T-cell (primary cell): ENCODE measurements at regions of chr5 and their contacts with region 1.

Region 1: DNA sequence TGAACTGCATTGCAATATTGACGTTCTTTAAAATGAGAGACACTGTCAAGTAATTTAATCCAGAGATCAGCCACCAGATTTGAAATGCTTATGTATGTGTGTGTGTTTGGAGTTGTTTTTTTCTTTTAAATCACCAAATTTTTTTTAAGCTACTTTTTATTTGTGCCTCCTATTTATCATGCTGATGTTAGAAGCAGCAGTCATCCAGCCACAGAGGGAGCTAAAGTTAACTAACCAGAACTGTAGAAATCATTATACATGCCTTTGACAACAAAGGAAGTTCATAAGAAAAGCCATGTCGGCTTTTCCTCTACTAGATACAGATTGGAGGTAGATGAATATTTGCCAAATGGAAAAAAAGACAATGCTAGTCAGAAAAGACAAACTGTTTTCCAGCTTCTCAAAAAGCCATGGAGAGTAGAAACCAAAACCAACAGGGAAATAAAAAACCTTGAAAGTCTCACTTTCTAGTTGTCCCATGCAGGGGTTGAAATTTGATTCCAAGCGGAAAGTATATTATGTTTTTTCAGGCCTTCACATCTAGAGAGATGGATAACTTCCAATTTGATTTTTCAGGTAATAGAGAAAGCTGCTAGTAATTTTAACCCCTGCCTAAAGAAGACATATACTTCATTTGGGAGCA is 4.5 kb downstream of the PURA start:
- DNase-seq: peak in 1 of 35 experiments; percentile 31
- ATAC-seq: no peak
- H3K4me3 ChIP-seq: no peak overlapping the region
- H3K4me3 Mint-ChIP-seq: peak overlapping the region in 1 of 3 donors; percentile 44
- H3K27ac ChIP-seq: no peak overlapping the region
- H3K27ac Mint-ChIP-seq: peak overlapping the region in 1 of 2 donors; percentile 47
- H3K4me1 ChIP-seq: peaks cover 11 to 21% of the 10 kb centered on the region in 2 experiments
- H3K4me1 Mint-ChIP-seq: peaks cover 57 to 62% (median 62%) of the 10 kb centered on the region in 3 donors
- H3K27me3 ChIP-seq: no peaks in the 10 kb centered on the region
- H3K27me3 Mint-ChIP-seq: no peaks in the 10 kb centered on the region

Region 2: GRCh38 chr5:140108084-140109017 is 10.1 kb before region 1 on chr5:
- CTCF ChIA-PET with region 1: interaction called in 1 of 2 experiments, 7 read pairs
- POLR2A ChIA-PET with region 1: interaction called, 8 to 13 read pairs
- DNase-seq: peak in 13 of 35 experiments; percentile 4 to 31 (median 20)
- ATAC-seq: peak in 1 of 4 experiments; percentile 0
- H3K4me3 ChIP-seq: peak overlapping the region; percentile 77 to 87
- H3K4me3 Mint-ChIP-seq: peak overlapping the region; percentile 91 to 96 (median 95)
- H3K27ac ChIP-seq: peak overlapping the region; percentile 97
- H3K27ac Mint-ChIP-seq: peak overlapping the region; percentile 95 to 98
- H3K4me1 ChIP-seq: peaks cover 17 to 42% of the 10 kb centered on the region in 2 experiments
- H3K4me1 Mint-ChIP-seq: peaks cover 51 to 59% (median 58%) of the 10 kb centered on the region in 3 donors
- H3K27me3 ChIP-seq: peaks cover 9 to 12% of the 10 kb centered on the region in 2 experiments
- H3K27me3 Mint-ChIP-seq: peaks cover 3 to 7% of the 10 kb centered on the region in 2 donors